Activated T-helper 2 cell treated with anti-CD3 and anti-CD28 coated beads, Interferon-gamma antibody, Interleukin-2, Interleukin-4, amounts not matched to agents 10 μg/mL and 5 μg/mL and 100 μg/mL, durations not matched to agents 14 hours and 24 hours and 36 hours (primary cell): ENCODE measurements at regions of chr1 and their contacts with region 1.

Region 1: GRCh38 chr1:44739361-44740178 is at the start of gene KIF2C:
- DNase-seq: peak; percentile 96
- H3K4me3 Mint-ChIP-seq: peak within 1 kb of the TSS; percentile 90
- H3K27ac Mint-ChIP-seq: peak within 1 kb of the TSS; percentile 86
- H3K4me1 Mint-ChIP-seq: peaks cover 28% of the 10 kb centered on the region
- H3K27me3 Mint-ChIP-seq: no peaks in the 10 kb centered on the region
- total RNA-seq, gene KIF2C: 82.7 and 83.5 TPM in 2 replicates

Region 2: GRCh38 chr1:44775078-44775929 is 35.7 kb after region 1 on chr1 and contains the start of gene RPS8:
- intact Hi-C with region 1: loop called (anchors 2 kb)
- DNase-seq: peak; percentile 86
- H3K4me3 Mint-ChIP-seq: peak within 1 kb of the TSS; percentile 88
- H3K27ac Mint-ChIP-seq: peak within 1 kb of the TSS; percentile 93
- H3K4me1 Mint-ChIP-seq: peaks cover 24% of the 10 kb centered on the region
- H3K27me3 Mint-ChIP-seq: no peaks in the 10 kb centered on the region
- total RNA-seq, gene RPS8: 2,328 and 2,356 TPM in 2 replicates